MCF 10A (cell line): ENCODE measurements at regions of chr3 and their contacts with region 1.

Region 1: GRCh38 chr3:124761250-124761796 is 31.1 kb downstream of the UMPS start:
- DNase-seq: peak; percentile 75
- H3K4me3 Mint-ChIP-seq: no peak overlapping the region
- H3K27ac Mint-ChIP-seq: peak overlapping the region; percentile 53
- H3K4me1 Mint-ChIP-seq: peaks cover 4% of the 10 kb centered on the region
- H3K27me3 Mint-ChIP-seq: no peaks in the 10 kb centered on the region
- CTCF ChIP-seq: peak; percentile 90

Region 2: DNA sequence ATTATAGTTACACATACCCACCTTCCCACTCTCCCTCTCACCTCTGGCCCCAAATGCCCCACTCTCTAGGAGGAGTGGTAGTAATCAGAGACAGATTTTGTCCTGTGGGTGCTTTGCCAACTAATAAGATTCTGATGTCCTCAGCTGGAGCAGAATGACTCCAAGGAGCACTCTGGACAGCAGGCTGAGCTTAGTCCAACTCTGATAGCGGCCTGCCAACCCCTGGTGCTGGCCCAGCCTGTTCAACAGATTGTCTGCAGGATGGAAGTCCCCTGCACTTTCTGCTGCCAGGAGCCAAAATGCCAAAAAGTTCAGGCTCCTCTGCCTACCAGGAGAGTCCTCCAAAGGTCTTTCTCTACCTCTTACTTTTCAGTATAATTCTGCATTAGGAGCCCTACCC is 191.6 kb before region 1 on chr3:
- CTCF ChIA-PET with region 1: interaction called, 10 read pairs
- POLR2A ChIA-PET with region 1: no interaction called
- intact Hi-C with region 1: no loop called
- DNase-seq: no peak
- H3K4me3 Mint-ChIP-seq: no peak overlapping the region
- H3K27ac Mint-ChIP-seq: no peak overlapping the region
- H3K4me1 Mint-ChIP-seq: peaks cover 6% of the 10 kb centered on the region
- H3K27me3 Mint-ChIP-seq: peaks cover 55% of the 10 kb centered on the region
- CTCF ChIP-seq: no peak

Region 3: DNA sequence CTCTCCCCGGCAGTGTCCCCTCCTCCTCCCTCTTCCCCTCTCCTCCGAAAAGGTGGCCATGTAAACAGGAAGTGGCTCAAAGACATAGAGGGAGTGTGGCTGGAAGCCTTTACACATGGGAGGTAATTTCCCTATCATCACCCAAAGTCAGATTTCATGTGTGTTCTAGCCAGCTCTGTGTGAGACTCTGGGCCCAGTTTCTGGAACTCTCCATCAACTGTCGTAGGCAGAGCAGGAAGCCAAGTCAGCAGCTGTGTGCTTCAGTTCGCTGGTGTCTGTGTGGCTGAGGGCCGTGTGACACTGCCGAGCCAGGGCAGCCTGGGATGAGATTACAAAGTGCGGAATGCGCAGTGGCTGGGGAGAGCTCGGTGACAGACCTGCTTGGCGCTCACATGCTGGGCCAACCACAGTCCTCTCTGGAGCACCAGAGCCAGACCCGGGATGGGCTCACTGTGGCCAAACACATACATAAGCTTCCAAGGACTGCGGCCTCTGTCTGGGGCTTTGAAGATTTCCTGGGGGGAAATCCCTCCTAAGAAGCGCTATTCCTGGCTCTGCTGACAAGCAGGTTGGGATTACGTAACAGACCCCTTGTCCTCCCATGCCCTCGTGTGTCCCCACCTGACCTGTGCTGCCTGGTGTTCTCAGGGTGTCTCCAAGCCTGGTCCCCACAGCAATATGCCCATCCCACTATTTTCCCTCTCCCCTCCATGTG is 19.6 kb after region 1 on chr3:
- CTCF ChIA-PET with region 1: interaction called, 72 read pairs
- POLR2A ChIA-PET with region 1: no interaction called
- intact Hi-C with region 1: no loop called
- DNase-seq: no peak
- H3K4me3 Mint-ChIP-seq: no peak overlapping the region
- H3K27ac Mint-ChIP-seq: peak overlapping the region; percentile 42
- H3K4me1 Mint-ChIP-seq: no peaks in the 10 kb centered on the region
- H3K27me3 Mint-ChIP-seq: no peaks in the 10 kb centered on the region
- CTCF ChIP-seq: no peak

Region 4: GRCh38 chr3:124887177-124887931 is 126.0 kb after region 1 on chr3 and contains the start of gene ITGB5:
- CTCF ChIA-PET with region 1: interaction called, 15 read pairs
- POLR2A ChIA-PET with region 1: interaction called, 5 read pairs
- intact Hi-C with region 1: loop called (anchors 5 kb)
- DNase-seq: peak; percentile 90
- H3K4me3 Mint-ChIP-seq: peak within 1 kb of the TSS; percentile 75
- H3K27ac Mint-ChIP-seq: peak within 1 kb of the TSS; percentile 36
- H3K4me1 Mint-ChIP-seq: peaks cover 24% of the 10 kb centered on the region
- H3K27me3 Mint-ChIP-seq: no peaks in the 10 kb centered on the region
- CTCF ChIP-seq: no peak
- total RNA-seq, gene ITGB5: 100 and 101 TPM in 2 replicates

Region 5: DNA sequence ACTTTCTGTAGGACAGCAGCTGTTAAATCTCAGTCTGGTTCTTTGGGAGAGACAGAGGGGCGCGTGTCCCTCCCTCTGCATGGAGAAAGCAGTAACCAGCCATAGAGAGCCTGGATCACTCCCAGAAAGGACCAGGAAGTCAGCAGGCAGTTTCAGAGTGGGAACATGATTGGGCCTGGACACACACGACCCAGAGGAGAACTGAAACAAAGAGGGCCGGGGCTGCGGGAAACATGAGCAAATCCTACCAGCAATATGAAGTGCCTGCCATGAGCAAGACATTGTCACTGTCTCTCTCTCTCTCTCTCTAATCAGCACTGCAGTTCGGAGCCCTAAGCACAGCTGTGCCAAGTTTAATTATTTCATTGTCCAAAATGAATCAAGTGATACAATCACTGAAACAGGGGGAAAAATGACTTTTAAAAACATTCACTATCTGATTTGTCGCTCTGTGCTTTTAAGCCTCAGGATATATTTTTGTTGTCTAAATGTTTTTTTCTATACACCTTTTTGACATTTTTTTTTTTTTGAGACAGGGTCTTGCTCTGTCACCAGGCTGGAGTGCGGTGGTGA is 155.6 kb after region 1 on chr3:
- CTCF ChIA-PET with region 1: interaction called, 10 read pairs
- POLR2A ChIA-PET with region 1: no interaction called
- intact Hi-C with region 1: no loop called
- DNase-seq: no peak
- H3K4me3 Mint-ChIP-seq: no peak overlapping the region
- H3K27ac Mint-ChIP-seq: no peak overlapping the region
- H3K4me1 Mint-ChIP-seq: no peaks in the 10 kb centered on the region
- H3K27me3 Mint-ChIP-seq: peaks cover 21% of the 10 kb centered on the region
- CTCF ChIP-seq: no peak

Region 6: DNA sequence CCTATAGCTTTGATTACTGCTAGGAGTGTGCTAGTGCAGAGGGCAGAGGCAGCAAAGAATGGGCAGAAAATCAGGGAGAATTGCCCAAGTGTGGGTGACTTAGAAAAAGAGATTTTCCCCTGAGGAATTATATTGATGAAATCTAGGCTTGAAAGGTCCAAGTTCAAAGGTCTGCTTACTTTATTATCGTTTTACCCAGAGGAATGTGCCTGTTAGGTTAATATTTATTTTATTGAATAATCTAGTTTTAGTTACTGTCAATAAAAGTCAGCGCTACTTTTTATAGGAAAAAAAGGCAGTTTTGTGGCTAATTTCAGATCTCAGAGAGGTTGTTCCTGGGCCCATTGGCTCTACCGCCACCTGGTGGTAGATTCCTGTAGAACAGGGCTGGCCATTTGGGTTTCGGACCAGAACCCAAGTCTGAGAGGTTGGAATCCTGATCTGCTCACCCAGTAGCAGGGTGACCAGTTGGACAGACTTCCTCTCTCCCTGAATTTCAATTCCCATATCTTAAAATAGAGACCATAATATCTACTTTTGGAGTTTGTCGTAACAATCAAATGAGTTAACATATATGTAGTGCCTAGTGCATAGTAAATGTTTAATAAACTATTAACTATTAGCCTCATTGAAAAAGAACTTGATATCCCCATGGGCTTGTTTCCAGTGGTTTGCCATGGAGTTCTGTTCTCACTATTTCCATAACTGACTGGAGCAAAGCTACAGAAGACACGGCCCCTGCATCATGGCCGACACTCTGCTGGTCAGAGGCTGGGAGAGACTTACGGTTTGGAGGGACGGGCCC is 676.5 kb after region 1 on chr3:
- CTCF ChIA-PET with region 1: interaction called, 11 read pairs
- POLR2A ChIA-PET with region 1: interaction called, 5 read pairs
- intact Hi-C with region 1: no loop called
- DNase-seq: peak; percentile 59
- H3K4me3 Mint-ChIP-seq: no peak overlapping the region
- H3K27ac Mint-ChIP-seq: no peak overlapping the region
- H3K4me1 Mint-ChIP-seq: peaks cover 14% of the 10 kb centered on the region
- H3K27me3 Mint-ChIP-seq: no peaks in the 10 kb centered on the region
- CTCF ChIP-seq: peak; percentile 90